Activated CD4-positive, alpha-beta T cell treated with anti-CD3 and anti-CD28 coated beads for 36 hours (primary cell): ENCODE measurements at regions of chr15 and their contacts with region 1.

Region 1: DNA sequence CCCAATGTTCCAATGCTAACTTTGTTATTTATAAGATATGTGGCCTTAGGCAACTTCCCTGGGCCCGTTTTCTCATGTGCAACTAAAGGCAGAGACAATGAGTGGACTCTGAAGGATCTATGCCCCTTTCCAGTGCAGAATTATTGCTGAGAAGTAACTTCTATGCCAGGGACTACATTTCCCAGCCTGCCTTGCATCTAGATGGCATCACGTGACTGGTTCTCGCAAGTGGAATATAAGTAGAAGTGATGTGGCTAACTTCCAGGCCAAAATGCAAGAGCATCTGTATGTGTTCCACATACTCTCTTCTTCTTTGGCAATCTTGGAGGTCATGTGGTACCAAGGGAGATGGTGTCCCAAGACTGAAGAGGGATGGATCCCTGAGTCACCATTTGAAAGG is 674.4 kb downstream of the NTRK3 start:
- DNase-seq: no peak
- ATAC-seq: no peak
- H3K4me3 Mint-ChIP-seq: no peak overlapping the region
- H3K27ac Mint-ChIP-seq: no peak overlapping the region
- H3K4me1 Mint-ChIP-seq: no peaks in the 10 kb centered on the region
- H3K27me3 Mint-ChIP-seq: no peaks in the 10 kb centered on the region

Region 2: DNA sequence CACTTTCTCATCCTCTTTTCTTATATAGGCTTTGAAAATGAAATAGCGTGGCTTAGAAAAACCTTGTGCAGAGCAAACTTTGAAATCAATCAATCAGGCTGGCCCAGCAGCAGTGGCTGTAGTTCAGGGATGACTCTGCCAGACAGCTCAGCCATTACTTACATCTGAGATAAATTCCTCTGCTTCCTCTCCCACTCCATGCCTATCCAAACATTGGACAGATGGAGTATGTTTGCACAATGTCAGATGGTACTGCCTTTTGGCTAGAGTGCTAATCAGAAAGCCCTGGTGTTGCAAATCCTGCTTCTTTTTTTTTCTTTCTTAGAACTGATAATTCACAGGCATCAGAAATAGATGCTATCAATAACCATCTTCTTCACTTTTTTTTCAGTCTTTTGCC is 437.4 kb before region 1 on chr15:
- CTCF ChIA-PET with region 1: no interaction called
- POLR2A ChIA-PET with region 1: no interaction called
- intact Hi-C with region 1: no loop called
- DNase-seq: no peak
- ATAC-seq: no peak
- H3K4me3 Mint-ChIP-seq: no peak overlapping the region
- H3K27ac Mint-ChIP-seq: no peak overlapping the region
- H3K4me1 Mint-ChIP-seq: no peaks in the 10 kb centered on the region
- H3K27me3 Mint-ChIP-seq: no peaks in the 10 kb centered on the region

Region 3: DNA sequence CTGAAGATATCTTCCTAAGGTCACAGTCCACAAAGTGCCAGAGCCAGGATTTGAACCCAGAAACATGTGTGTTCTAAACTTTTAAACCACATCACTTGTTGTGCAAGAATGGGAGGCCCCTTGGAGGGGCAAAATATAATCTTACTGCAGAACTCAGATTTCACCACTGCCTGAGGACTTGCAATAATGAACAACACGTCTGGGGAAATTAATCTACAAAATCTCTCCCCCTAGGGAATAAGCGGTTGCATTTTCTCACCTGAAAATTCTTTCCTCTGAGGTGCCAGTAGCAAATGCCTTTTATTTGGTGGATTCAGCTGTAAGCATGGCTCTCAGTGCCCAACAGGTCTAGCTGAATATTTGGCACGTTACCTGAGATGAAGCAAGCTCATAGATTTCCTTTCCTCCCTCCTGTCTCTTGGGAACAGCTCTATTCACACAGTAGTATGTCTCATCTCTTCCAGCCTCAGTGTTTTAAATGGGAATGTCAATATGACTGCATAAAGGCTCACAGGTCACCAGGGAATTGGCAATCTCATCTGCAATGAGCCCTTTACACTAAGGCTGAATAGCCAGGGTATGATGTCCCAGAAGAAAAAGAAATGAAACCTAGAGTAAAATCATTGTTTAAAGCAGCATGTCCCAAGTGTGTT is 59.3 kb before region 1 on chr15:
- CTCF ChIA-PET with region 1: no interaction called
- POLR2A ChIA-PET with region 1: no interaction called
- intact Hi-C with region 1: no loop called
- DNase-seq: no peak
- ATAC-seq: no peak
- H3K4me3 Mint-ChIP-seq: no peak overlapping the region
- H3K27ac Mint-ChIP-seq: no peak overlapping the region
- H3K4me1 Mint-ChIP-seq: no peaks in the 10 kb centered on the region
- H3K27me3 Mint-ChIP-seq: peaks cover 2% of the 10 kb centered on the region

Region 4: GRCh38 chr15:87648278-87648677 is 66.1 kb after region 1 on chr15:
- CTCF ChIA-PET with region 1: no interaction called
- POLR2A ChIA-PET with region 1: no interaction called
- intact Hi-C with region 1: loop called in 1 of 2 experiments (anchors 10 kb)
- DNase-seq: no peak
- ATAC-seq: no peak
- H3K4me3 Mint-ChIP-seq: no peak overlapping the region
- H3K27ac Mint-ChIP-seq: no peak overlapping the region
- H3K4me1 Mint-ChIP-seq: no peaks in the 10 kb centered on the region
- H3K27me3 Mint-ChIP-seq: peaks cover 2% of the 10 kb centered on the region

Region 5: GRCh38 chr15:87672309-87673288 is 90.4 kb after region 1 on chr15:
- CTCF ChIA-PET with region 1: no interaction called
- POLR2A ChIA-PET with region 1: no interaction called
- intact Hi-C with region 1: no loop called
- DNase-seq: no peak
- ATAC-seq: no peak
- H3K4me3 Mint-ChIP-seq: no peak overlapping the region
- H3K27ac Mint-ChIP-seq: no peak overlapping the region
- H3K4me1 Mint-ChIP-seq: no peaks in the 10 kb centered on the region
- H3K27me3 Mint-ChIP-seq: peaks cover 4% of the 10 kb centered on the region